Endothelial cell of umbilical vein (primary cell): ENCODE measurements at regions of chr5 and their contacts with region 1.

Region 1: GRCh38 chr5:142655339-142656267 is 30.3 kb downstream of the FGF1 start:
- DNase-seq: peak; percentile 84
- H3K4me3 ChIP-seq: no peak overlapping the region
- H3K27ac ChIP-seq: no peak overlapping the region
- H3K4me1 ChIP-seq: no peaks in the 10 kb centered on the region
- H3K27me3 ChIP-seq: peaks cover 2 to 14% of the 10 kb centered on the region in 2 experiments
- CTCF ChIP-seq: peak; percentile 96 to 98
- POLR2A ChIP-seq: no peak

Region 2: DNA sequence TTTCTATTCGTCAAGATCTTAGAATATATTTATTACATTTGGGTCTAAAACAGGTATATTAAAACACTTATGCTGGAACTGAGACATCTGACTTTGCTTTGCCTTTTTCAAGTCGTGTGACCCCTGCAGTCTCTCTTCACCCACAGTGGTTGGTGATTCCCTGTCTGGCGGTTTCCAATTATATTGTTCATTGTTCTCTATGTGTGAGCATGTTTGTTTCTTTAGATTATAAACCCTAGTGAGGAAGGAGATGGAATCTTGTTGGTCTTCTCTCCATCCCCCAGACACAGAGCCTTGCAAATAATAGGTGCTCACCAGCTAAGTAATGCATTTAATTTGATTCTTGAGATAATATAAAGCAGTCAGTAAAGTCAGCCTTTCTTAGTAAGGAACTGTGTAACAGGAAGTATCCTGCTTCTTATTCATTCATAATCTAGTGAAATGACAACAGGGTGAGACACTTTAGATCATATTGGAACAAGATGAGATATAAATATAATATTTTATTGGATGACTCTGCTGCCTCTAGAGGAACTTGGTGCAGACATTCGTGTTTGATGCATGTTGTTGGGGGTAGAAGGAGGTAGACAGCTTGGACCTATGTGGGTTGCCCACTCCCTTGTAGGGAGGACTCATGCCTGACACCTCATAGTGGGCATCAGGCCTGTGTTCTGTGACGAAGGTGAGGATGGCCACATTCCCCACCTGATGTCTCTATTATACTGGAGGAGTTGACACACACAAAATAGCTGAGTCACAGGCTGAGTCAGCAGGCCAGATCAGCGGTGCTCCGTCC is 57.9 kb before region 1 on chr5:
- CTCF ChIA-PET with region 1: interaction called, 18 read pairs
- POLR2A ChIA-PET with region 1: no interaction called
- dilution Hi-C with region 1: no loop called
- intact Hi-C with region 1: no loop called
- DNase-seq: peak; percentile 81
- H3K4me3 ChIP-seq: no peak overlapping the region
- H3K27ac ChIP-seq: no peak overlapping the region
- H3K4me1 ChIP-seq: peaks cover 26% of the 10 kb centered on the region
- H3K27me3 ChIP-seq: no peaks in the 10 kb centered on the region
- CTCF ChIP-seq: no peak
- POLR2A ChIP-seq: no peak

Region 3: DNA sequence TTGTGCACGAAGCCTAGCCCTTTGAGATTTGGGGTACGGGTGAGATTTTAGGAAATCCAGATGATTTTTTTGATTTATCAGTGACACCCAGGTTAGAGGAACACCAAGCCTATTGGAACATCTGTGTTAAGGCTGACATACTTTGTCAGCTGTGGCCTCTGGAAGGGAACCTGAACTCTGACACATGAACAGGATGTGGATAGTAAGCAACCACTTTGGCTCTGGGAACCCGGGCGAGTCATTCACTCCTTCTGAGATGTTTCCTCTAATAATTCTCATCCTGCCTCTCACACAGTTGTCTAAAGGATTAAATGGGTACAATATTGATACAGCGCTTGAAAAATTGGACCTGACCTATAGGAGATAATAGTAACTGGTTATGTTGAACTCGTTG is 37.5 kb before region 1 on chr5:
- CTCF ChIA-PET with region 1: interaction called, 23 read pairs
- POLR2A ChIA-PET with region 1: no interaction called
- dilution Hi-C with region 1: no loop called
- intact Hi-C with region 1: no loop called
- DNase-seq: peak; percentile 35
- H3K4me3 ChIP-seq: no peak overlapping the region
- H3K27ac ChIP-seq: no peak overlapping the region
- H3K4me1 ChIP-seq: no peaks in the 10 kb centered on the region
- H3K27me3 ChIP-seq: no peaks in the 10 kb centered on the region
- CTCF ChIP-seq: no peak
- POLR2A ChIP-seq: no peak

Region 4: GRCh38 chr5:142644640-142645361 is 10.8 kb before region 1 on chr5:
- CTCF ChIA-PET with region 1: interaction called, 61 read pairs
- POLR2A ChIA-PET with region 1: interaction called, 3 read pairs
- dilution Hi-C with region 1: no loop called
- intact Hi-C with region 1: loop called (anchors 2 kb)
- DNase-seq: peak; percentile 91
- H3K4me3 ChIP-seq: no peak overlapping the region
- H3K27ac ChIP-seq: peak overlapping the region; percentile 82
- H3K4me1 ChIP-seq: peaks cover 12% of the 10 kb centered on the region
- H3K27me3 ChIP-seq: no peaks in the 10 kb centered on the region
- CTCF ChIP-seq: no peak
- POLR2A ChIP-seq: peak; percentile 34

Region 5: DNA sequence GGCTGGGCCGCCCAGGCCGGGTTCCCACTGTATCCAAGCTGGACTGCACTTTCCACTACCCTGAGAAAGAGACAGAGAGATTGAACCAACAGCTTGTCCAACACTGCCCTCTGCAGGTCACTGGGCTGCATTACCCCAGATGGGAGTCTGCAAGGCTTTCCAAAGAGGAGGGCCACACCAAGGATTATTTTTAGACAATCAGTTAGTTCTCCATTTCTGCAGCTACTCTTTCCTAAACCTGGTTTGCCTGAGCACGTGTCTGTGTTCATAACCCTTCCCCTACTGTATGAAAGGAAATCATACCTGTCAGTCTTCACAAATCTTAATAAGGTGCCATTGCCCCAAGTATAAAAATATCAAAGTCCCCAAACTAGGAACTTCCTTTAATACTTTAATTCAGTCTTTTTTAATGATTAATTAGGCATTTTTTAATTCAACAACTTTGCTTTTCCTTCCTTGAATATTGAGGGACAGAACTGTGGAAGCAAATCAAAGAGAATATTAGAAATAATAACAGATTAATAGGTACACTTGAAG is 43.6 kb after region 1 on chr5:
- CTCF ChIA-PET with region 1: interaction called, 355 read pairs
- POLR2A ChIA-PET with region 1: no interaction called
- dilution Hi-C with region 1: no loop called
- intact Hi-C with region 1: loop called (anchors 1 kb)
- DNase-seq: peak; percentile 83
- H3K4me3 ChIP-seq: no peak overlapping the region
- H3K27ac ChIP-seq: no peak overlapping the region
- H3K4me1 ChIP-seq: no peaks in the 10 kb centered on the region
- H3K27me3 ChIP-seq: peaks cover 0 to 6% of the 10 kb centered on the region in 2 experiments
- CTCF ChIP-seq: peak; percentile 91 to 93
- POLR2A ChIP-seq: no peak